Cardiac septum (tissue), 1 donor: ENCODE measurements at regions of chr9 and their contacts with region 1.

Region 1: GRCh38 chr9:69085569-69086283 is 50.2 kb downstream of the FXN start:
- DNase-seq: no peak

Region 2: GRCh38 chr9:69121828-69122548 is 36.3 kb after region 1 on chr9:
- intact Hi-C with region 1: loop called (anchors 5 kb)
- DNase-seq: peak; percentile 82

Region 3: GRCh38 chr9:69131682-69132081 is 46.0 kb after region 1 on chr9:
- intact Hi-C with region 1: loop called (anchors 5 kb)
- DNase-seq: no peak